WTC11 (cell line): ENCODE measurements at regions of chr3 and their contacts with region 1.

Region 1: GRCh38 chr3:137110484-137110883 is 152.7 kb downstream of the IL20RB start:
- DNase-seq: no peak
- ATAC-seq: peak; percentile 61
- H3K4me3 Mint-ChIP-seq: no peak overlapping the region
- H3K27ac Mint-ChIP-seq: no peak overlapping the region
- H3K4me1 Mint-ChIP-seq: peaks cover 30% of the 10 kb centered on the region
- H3K27me3 Mint-ChIP-seq: no peaks in the 10 kb centered on the region
- CTCF ChIP-seq: peak; percentile 71

Region 2: DNA sequence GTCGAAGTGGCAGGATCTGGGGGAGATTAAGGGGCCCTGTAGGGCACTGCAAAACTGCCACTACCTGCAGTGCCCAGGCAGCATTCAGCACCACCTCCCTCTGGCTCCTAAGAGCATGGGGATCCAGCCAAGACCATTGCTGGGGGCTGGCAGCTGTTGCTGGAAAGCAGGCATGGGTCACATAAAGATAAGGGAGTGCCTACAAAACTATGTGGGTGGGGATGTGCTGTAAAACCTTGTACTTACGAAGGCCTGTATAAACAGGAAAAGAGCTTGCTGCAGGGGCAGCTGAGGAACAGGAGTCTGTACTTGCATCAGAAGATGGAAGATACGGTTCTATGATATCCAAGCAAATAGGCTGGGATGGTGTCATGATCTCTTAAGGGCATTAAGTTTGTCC is 125.6 kb before region 1 on chr3:
- CTCF ChIA-PET with region 1: no interaction called
- POLR2A ChIA-PET with region 1: no interaction called
- DNase-seq: no peak
- ATAC-seq: no peak
- H3K4me3 Mint-ChIP-seq: no peak overlapping the region
- H3K27ac Mint-ChIP-seq: no peak overlapping the region
- H3K4me1 Mint-ChIP-seq: no peaks in the 10 kb centered on the region
- H3K27me3 Mint-ChIP-seq: no peaks in the 10 kb centered on the region
- CTCF ChIP-seq: no peak

Region 3: DNA sequence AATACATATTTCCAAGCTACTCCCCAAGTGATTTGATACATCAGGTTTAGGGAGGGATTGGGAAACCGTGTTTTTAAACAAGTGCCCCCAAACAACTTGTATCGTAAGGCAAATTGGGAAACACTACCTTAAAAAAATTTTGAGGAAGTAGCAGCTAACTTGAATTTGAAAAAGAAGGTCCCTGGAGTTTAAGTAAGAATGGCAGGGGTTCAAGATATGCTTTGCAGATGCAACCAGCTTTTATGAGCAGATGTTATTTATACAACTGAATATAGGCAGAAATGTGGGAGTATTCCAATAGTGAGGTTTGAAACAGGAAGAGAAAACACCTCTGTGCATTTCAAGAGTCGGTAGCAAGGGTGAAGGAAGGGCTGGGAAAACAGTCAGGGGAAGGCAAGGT is 13.1 kb before region 1 on chr3:
- CTCF ChIA-PET with region 1: interaction called, 14 read pairs
- POLR2A ChIA-PET with region 1: interaction called, 3 read pairs
- DNase-seq: no peak
- ATAC-seq: no peak
- H3K4me3 Mint-ChIP-seq: no peak overlapping the region
- H3K27ac Mint-ChIP-seq: no peak overlapping the region
- H3K4me1 Mint-ChIP-seq: peaks cover 16% of the 10 kb centered on the region
- H3K27me3 Mint-ChIP-seq: no peaks in the 10 kb centered on the region; the same call in 1 of the 2 replicates
- CTCF ChIP-seq: no peak

Region 4: GRCh38 chr3:137131081-137131480 is 20.6 kb after region 1 on chr3:
- CTCF ChIA-PET with region 1: interaction called, 15 read pairs
- POLR2A ChIA-PET with region 1: no interaction called
- DNase-seq: no peak
- ATAC-seq: peak; percentile 80
- H3K4me3 Mint-ChIP-seq: no peak overlapping the region
- H3K27ac Mint-ChIP-seq: no peak overlapping the region
- H3K4me1 Mint-ChIP-seq: peaks cover 29% of the 10 kb centered on the region
- H3K27me3 Mint-ChIP-seq: peaks cover 4% of the 10 kb centered on the region; the same call in 1 of the 2 replicates
- CTCF ChIP-seq: no peak

Region 5: DNA sequence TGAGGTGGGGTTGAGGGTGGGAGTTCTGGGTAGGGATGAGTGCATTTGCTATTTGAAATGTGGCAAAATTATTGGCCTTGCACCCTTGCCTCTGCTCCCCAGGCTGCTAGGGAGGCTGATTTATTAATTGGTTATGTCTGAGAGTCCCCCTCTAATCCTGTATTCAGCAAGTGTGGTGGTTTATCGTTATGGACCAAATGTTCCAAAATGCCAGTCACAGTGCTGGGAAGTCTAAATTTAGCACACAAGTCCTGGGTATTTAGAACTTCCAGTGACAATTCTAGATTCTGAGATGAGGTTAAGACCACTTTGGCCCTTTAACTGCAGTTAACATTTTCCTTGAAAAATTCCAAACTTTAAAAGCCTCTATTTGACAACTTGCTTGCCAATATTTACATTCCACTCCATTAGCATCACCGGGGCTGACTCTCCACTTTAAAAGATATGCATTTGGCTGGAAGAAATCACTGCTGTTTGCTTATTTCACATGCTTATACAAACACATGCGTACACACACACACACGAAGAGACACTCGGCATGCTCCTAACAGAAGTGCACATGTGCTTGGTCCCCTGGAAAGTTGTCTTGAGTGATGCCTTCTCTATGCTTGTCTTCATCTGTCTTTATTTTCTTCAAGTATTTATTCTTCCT is 95.0 kb after region 1 on chr3:
- CTCF ChIA-PET with region 1: interaction called, 10 read pairs
- POLR2A ChIA-PET with region 1: no interaction called
- DNase-seq: no peak
- ATAC-seq: no peak
- H3K4me3 Mint-ChIP-seq: no peak overlapping the region
- H3K27ac Mint-ChIP-seq: no peak overlapping the region
- H3K4me1 Mint-ChIP-seq: peaks cover 7% of the 10 kb centered on the region; the same call in 1 of the 2 replicates
- H3K27me3 Mint-ChIP-seq: no peaks in the 10 kb centered on the region; the same call in 1 of the 2 replicates
- CTCF ChIP-seq: no peak

Region 6: DNA sequence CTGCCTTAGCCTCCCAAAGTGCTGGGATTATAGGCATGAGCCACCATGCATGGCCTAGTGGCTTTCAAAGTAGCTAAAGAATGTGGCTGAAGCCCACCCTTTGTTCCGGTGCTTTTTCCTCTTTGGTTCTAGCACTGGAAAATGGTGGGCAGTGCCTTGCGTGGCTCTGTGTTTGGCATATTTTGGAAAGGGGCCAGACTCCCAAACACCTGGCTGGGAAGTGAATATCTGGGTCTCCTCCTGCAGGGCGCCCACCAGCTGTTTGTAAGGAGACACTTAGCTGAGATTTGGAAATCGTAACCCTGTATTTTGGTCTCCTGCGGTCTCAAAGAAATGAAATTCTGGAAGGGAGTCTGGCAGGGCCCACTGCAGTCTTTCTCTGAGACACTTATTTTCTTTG is 183.7 kb after region 1 on chr3:
- CTCF ChIA-PET with region 1: interaction called, 25 read pairs
- POLR2A ChIA-PET with region 1: no interaction called
- DNase-seq: no peak
- ATAC-seq: peak; percentile 18
- H3K4me3 Mint-ChIP-seq: no peak overlapping the region
- H3K27ac Mint-ChIP-seq: peak overlapping the region; percentile 30; the same call in 1 of the 2 replicates
- H3K4me1 Mint-ChIP-seq: peaks cover 31% of the 10 kb centered on the region
- H3K27me3 Mint-ChIP-seq: peaks cover 12% of the 10 kb centered on the region; the same call in 1 of the 2 replicates
- CTCF ChIP-seq: no peak

Region 7: GRCh38 chr3:137692803-137693431 is 582.4 kb after region 1 on chr3:
- CTCF ChIA-PET with region 1: interaction called, 15 read pairs
- POLR2A ChIA-PET with region 1: no interaction called
- DNase-seq: peak; percentile 80
- ATAC-seq: peak; percentile 90
- H3K4me3 Mint-ChIP-seq: no peak overlapping the region
- H3K27ac Mint-ChIP-seq: no peak overlapping the region
- H3K4me1 Mint-ChIP-seq: peaks cover 16% of the 10 kb centered on the region
- H3K27me3 Mint-ChIP-seq: no peaks in the 10 kb centered on the region
- CTCF ChIP-seq: peak; percentile 70